ENCODE measurements at regions of chr3 and their contacts with region 1.

Region 1: DNA sequence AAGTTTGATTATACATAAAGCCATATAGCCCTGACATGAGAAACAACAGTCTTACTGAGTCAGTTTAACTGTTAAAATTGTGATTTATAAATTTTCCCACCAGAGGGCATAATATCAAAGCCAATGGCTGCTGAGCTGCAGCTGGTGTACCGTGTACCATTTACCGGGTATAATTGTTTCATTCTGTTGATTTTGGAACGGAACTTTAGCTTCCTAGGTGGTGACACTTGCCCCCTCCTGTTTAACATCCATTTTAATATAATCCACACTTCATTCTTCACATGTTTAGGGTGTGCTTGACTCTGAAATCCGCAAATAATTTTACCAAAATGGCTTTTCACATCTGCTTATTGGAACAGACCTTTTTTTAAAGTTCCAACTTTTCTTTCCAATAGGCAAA is 72.8 kb downstream of the SLC9A9 start:
- DNase-seq: no peak
- ATAC-seq: peak in 1 of 2 donors; percentile 70
- H3K4me3 ChIP-seq: peak overlapping the region in 2 of 4 donors; percentile 5 to 33
- H3K27ac ChIP-seq: no peak overlapping the region
- H3K4me1 ChIP-seq: no peaks in the 10 kb centered on the region
- H3K27me3 ChIP-seq: no peaks in the 10 kb centered on the region
- CTCF ChIP-seq: peak in 4 of 5 experiments; percentile 9 to 57 (median 31)
- POLR2A ChIP-seq: no peak

Region 2: DNA sequence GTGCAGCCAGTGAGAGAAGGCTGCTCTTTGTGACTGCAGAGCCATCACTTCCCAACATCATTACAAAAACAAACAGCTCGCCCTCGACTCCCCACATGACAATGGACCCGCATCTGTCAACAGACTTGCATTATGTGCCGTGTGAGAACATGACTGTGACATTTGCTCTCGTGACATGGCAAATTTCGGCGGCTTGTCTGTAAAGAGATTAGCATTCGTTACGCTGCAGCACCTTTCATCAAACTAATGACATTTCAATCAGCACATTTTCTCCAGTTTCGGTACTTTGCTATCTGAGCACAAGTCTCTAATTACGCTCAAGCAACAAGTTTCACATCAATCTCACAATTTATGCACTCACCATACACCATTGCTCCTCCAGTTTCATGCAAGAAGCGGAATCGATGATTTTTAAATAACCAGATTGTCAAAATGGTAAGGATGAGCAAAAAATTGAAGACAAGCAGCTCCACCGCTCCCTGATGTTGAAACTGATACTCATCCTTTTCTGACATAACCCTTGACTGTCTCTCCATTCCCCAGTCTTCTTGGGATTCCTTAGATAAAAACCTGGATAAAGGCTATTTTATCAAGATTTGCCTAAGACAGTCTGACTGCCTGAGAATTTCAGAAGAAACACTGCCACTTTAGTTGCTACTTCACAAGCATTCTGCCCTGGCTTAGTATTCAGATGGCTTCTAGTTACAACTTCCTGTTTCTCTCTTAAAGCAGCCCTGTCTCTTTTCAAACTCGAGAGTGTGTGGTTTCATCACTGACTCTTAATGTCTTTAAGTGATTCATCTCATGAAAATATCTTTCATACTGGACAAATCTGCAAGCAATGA is 72.5 kb after region 1 on chr3 and contains the start of gene SLC9A9:
- in situ Hi-C with region 1: no loop called
- intact Hi-C with region 1: loop called (anchors 1 kb)
- DNase-seq: peak; percentile 29 to 30
- ATAC-seq: peak; percentile 89 to 90
- H3K4me3 ChIP-seq: peak within 1 kb of the TSS; percentile 63 to 71 (median 66)
- H3K27ac ChIP-seq: peak within 1 kb of the TSS; percentile 3 to 68 (median 62)
- H3K4me1 ChIP-seq: peaks cover 20 to 34% of the 10 kb centered on the region in 2 donors
- H3K27me3 ChIP-seq: no peaks in the 10 kb centered on the region
- CTCF ChIP-seq: no peak
- POLR2A ChIP-seq: no peak
- total RNA-seq, gene SLC9A9: 1.7 to 8.2 (median 3.6) TPM

Region 3: GRCh38 chr3:143885780-143886427 is 110.4 kb after region 1 on chr3:
- in situ Hi-C with region 1: loop called in 1 of 4 experiments (anchors 25 kb)
- intact Hi-C with region 1: no loop called
- DNase-seq: no peak
- ATAC-seq: no peak
- H3K4me3 ChIP-seq: no peak overlapping the region
- H3K27ac ChIP-seq: no peak overlapping the region
- H3K4me1 ChIP-seq: no peaks in the 10 kb centered on the region
- H3K27me3 ChIP-seq: no peaks in the 10 kb centered on the region
- CTCF ChIP-seq: peak in 4 of 5 experiments; percentile 10 to 54 (median 33)
- POLR2A ChIP-seq: no peak